ENCODE measurements at regions of chr13 and their contacts with region 1.

Region 1: GRCh38 chr13:107271227-107271626 is 703.3 kb upstream of the ARGLU1 start:
- DNase-seq: peak; percentile 90
- H3K4me3 ChIP-seq: no peak overlapping the region
- H3K27ac ChIP-seq: peak overlapping the region; percentile 39
- H3K4me1 ChIP-seq: peaks cover 14% of the 10 kb centered on the region
- H3K27me3 ChIP-seq: no peaks in the 10 kb centered on the region
- CTCF ChIP-seq: no peak
- POLR2A ChIP-seq: no peak

Region 2: DNA sequence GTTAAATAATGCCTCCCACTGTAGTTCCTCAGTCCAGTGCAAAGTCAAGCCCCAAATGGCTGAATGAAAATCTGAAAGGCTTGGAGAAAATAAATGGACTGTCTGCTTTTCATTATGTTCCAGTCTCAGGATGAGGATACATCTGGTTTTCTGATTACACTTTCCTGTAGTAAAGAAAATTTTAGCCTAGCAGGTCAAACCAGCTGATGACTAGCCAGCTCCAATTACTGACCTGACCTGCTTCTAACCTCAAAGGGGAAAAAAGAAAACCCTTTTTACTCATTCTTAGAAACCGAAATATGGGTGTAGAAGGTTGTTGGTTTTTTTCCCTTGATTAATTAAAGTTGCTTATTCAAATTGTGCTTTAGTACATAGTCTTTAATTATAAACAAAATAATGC is 1154.2 kb before region 1 on chr13:
- CTCF ChIA-PET with region 1: no interaction called
- POLR2A ChIA-PET with region 1: no interaction called
- dilution Hi-C with region 1: no loop called
- intact Hi-C with region 1: loop called (anchors 10 kb)
- DNase-seq: peak; percentile 93
- H3K4me3 ChIP-seq: no peak overlapping the region
- H3K27ac ChIP-seq: peak overlapping the region; percentile 74
- H3K4me1 ChIP-seq: peaks cover 52% of the 10 kb centered on the region
- H3K27me3 ChIP-seq: no peaks in the 10 kb centered on the region
- CTCF ChIP-seq: no peak
- POLR2A ChIP-seq: no peak

Region 3: GRCh38 chr13:107284173-107284572 is 12.9 kb after region 1 on chr13:
- CTCF ChIA-PET with region 1: interaction called, 3 read pairs
- POLR2A ChIA-PET with region 1: no interaction called
- dilution Hi-C with region 1: no loop called
- intact Hi-C with region 1: loop called (anchors 1 kb)
- DNase-seq: peak; percentile 83
- H3K4me3 ChIP-seq: no peak overlapping the region
- H3K27ac ChIP-seq: peak overlapping the region; percentile 93
- H3K4me1 ChIP-seq: peaks cover 11% of the 10 kb centered on the region
- H3K27me3 ChIP-seq: no peaks in the 10 kb centered on the region
- CTCF ChIP-seq: no peak
- POLR2A ChIP-seq: no peak

Region 4: GRCh38 chr13:107365466-107366215 is 94.4 kb after region 1 on chr13:
- CTCF ChIA-PET with region 1: interaction called, 4 read pairs
- POLR2A ChIA-PET with region 1: no interaction called
- dilution Hi-C with region 1: no loop called
- intact Hi-C with region 1: loop called (anchors 2 kb)
- DNase-seq: no peak
- H3K4me3 ChIP-seq: no peak overlapping the region
- H3K27ac ChIP-seq: no peak overlapping the region
- H3K4me1 ChIP-seq: peaks cover 31% of the 10 kb centered on the region
- H3K27me3 ChIP-seq: no peaks in the 10 kb centered on the region
- CTCF ChIP-seq: no peak
- POLR2A ChIP-seq: no peak

Region 5: DNA sequence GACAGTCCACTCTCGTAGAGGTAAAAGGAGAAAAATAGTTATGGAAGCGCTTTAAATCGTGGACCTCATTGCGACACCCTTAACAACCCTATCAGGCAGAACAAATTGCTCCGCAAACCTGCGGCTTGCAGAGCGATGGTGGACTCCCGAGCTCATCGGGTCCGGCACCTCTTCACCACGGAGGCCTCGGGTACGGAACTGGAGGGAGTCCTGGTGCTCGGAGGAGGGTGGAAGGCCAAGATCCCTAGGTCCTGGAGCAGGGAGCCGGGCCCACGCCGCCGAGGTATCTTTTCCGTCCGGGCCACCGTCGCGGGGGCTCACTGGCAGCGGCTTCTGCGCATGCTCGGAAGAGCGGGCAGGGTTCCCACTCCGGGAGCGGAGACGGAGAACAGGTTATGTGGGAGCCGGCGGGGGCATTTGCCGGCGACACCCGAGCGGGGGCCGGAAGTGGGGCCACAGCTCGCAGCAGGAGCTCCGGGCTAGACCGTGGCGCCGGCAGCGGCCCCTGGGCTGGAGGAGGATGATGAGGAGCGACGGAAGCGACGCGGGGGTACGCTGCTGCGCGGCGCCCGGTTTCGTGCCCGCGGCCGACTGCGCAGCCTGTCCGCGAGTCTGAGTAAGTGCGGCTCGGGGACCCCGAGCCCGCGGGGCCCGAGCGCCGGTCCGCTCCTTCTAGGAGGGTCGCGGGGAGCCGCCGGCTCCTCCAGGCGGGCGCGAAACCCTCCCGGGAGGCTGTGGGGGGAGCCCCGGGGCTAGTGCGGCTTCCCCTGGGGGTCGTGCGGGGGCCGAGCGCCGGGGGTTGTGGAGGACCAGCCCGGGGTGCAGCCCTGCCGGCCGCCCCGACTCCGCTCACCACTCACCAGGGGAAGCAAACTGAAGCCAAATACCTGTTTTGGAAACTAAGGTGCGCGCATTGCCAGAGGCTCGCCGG is 947.1 kb after region 1 on chr13 and contains the start of gene ABHD13:
- CTCF ChIA-PET with region 1: no interaction called
- POLR2A ChIA-PET with region 1: no interaction called
- dilution Hi-C with region 1: no loop called
- intact Hi-C with region 1: loop called (anchors 10 kb)
- DNase-seq: peak; percentile 90
- H3K4me3 ChIP-seq: peak within 1 kb of the TSS; percentile 74 to 81 (median 74)
- H3K27ac ChIP-seq: peak within 1 kb of the TSS; percentile 85
- H3K4me1 ChIP-seq: peaks cover 18% of the 10 kb centered on the region
- H3K27me3 ChIP-seq: no peaks in the 10 kb centered on the region
- CTCF ChIP-seq: no peak
- POLR2A ChIP-seq: peak; percentile 73
- total RNA-seq, gene ABHD13: 6.2 and 7.2 TPM in 2 replicates